Activated naive CD4-positive, alpha-beta T cell treated with anti-CD3 and anti-CD28 coated beads for 36 hours (primary cell): ENCODE measurements at regions of chr14 and their contacts with region 1.

Region 1: DNA sequence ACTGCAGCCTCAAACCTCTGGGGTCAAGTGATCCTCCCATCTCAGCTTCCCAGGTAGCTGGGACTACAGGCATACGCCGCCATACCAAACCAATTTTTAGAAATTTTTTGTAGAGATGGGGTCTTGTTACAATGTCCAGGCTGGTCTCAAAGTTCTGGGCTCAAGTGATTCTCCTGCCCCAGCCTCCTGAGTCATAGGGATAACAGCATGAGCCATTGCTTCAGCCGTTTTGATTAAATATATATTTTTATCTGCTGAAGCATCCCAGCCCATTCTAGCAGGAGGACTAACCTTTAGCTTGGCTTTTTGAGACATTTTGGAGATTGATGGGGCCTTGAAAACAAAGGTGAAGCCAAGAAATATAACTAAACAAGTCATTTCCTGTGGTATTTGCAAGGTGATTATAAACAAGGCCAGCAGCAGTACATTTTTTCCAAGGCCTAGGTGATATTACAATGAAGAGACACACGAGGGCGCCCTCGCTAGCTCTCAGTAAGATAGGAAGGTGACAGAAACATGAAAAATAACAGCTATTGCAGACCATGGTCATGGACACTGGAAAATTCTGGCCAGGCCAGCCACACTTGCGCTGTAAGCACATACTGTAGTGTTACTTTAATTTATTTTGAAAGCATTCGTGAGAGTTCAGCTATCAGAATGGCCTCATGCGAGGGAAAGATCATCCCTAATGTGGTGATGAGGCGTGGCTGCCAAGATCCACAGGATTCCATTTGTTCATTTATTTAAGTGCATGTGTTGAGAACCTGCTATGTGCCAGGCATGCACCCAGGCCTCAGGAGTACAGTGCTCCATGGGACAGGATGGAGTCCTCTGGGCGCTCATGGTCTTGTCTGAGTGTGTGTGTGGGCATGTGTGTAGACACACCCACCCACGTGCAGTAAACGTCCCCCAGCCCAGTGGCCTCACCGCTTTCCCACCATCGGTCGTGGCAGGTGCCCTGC is 63.5 kb downstream of the DGLUCY start:
- DNase-seq: peak; percentile 84
- H3K4me3 Mint-ChIP-seq: no peak overlapping the region
- H3K27ac Mint-ChIP-seq: peak overlapping the region; percentile 58
- H3K4me1 Mint-ChIP-seq: peaks cover 9% of the 10 kb centered on the region
- H3K27me3 Mint-ChIP-seq: no peaks in the 10 kb centered on the region

Region 2: GRCh38 chr14:90726656-90727055 is 450.7 kb before region 1 on chr14:
- CTCF ChIA-PET with region 1: no interaction called
- intact Hi-C with region 1: no loop called
- DNase-seq: no peak
- H3K4me3 Mint-ChIP-seq: no peak overlapping the region
- H3K27ac Mint-ChIP-seq: no peak overlapping the region
- H3K4me1 Mint-ChIP-seq: no peaks in the 10 kb centered on the region
- H3K27me3 Mint-ChIP-seq: no peaks in the 10 kb centered on the region

Region 3: GRCh38 chr14:90903101-90903500 is 274.3 kb before region 1 on chr14:
- CTCF ChIA-PET with region 1: interaction called, 215 read pairs
- intact Hi-C with region 1: loop called (anchors 1 kb)
- DNase-seq: peak; percentile 81
- H3K4me3 Mint-ChIP-seq: no peak overlapping the region
- H3K27ac Mint-ChIP-seq: no peak overlapping the region
- H3K4me1 Mint-ChIP-seq: peaks cover 25% of the 10 kb centered on the region
- H3K27me3 Mint-ChIP-seq: no peaks in the 10 kb centered on the region

Region 4: DNA sequence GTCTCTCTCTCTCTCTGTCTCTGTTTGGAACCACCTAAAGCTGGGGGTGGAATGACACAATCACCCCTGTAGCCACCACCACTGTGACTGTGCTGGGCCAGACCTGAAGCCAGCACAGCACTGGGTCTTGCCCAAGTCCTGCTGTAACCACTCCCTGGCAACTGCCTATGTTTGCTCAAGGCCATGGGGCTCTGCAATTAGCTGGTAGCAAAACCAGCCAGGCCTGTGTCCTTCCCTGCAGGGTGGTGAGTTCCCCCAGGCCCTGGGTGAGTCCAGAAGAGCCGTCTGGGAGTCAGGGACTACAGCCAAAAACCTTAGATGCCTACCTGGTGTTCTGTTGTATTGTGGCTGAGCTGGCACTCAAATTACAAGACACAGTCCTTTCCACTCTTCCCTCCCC is 12.7 kb before region 1 on chr14:
- CTCF ChIA-PET with region 1: interaction called, 12 read pairs
- intact Hi-C with region 1: no loop called
- DNase-seq: no peak
- H3K4me3 Mint-ChIP-seq: no peak overlapping the region
- H3K27ac Mint-ChIP-seq: no peak overlapping the region
- H3K4me1 Mint-ChIP-seq: no peaks in the 10 kb centered on the region
- H3K27me3 Mint-ChIP-seq: no peaks in the 10 kb centered on the region

Region 5: DNA sequence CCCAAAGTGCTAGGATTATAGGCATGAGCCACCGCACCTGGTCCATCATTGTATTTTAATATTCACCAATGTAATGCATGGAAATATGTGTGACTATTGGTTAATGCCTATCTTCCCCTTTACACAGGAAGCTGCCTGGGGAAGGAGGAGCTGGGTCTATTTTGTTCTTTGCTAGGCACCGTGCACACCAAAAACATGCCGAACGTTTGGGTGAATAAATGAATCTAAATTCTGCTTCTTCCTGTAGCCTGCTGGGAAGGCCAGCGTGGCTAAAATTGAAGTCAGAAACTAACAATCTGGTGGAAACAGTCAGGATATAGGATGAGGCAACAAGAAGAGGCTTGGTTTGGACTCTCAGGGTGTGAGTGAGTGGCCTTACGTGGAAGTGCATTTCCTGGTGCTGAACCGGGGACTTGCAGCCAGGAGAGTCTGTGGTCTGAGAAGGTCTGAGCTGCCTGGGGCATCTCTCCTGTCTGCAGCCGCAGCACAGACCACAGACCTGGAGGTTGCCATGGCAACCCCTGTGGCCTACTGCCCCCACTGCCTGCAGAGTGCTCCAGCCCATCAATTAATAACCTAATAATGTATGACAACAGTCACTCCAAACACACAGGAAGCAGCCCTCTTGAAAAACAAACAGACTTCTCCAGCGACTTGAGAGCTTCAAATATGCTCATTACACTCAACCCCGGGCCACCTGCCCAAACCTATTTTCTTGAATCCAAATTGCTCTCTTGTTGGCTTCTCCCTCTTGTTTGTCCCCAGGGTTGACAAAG is 72.7 kb after region 1 on chr14:
- CTCF ChIA-PET with region 1: interaction called, 14 read pairs
- intact Hi-C with region 1: no loop called
- DNase-seq: peak; percentile 42
- H3K4me3 Mint-ChIP-seq: no peak overlapping the region
- H3K27ac Mint-ChIP-seq: peak overlapping the region; percentile 70
- H3K4me1 Mint-ChIP-seq: peaks cover 81% of the 10 kb centered on the region
- H3K27me3 Mint-ChIP-seq: no peaks in the 10 kb centered on the region

Region 6: DNA sequence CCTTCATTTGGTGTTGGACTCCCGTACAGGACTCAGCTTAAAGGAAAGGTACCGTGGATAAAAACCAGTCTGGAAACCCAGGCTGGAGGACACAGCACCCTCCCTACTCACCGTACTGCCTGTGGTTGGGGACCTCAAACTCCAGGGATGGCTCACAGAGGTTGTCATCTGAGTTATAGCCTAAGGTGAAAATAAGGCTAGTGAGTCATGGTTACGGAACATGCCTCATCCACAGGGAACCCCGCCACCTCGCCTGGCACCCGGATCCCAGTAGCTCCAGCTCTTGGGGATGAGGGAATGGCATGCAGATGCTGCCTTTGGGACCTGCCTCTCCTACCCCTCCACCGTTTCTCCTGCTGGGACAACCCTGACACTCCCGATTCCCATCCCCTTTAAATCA is 104.0 kb after region 1 on chr14:
- CTCF ChIA-PET with region 1: interaction called, 203 read pairs
- intact Hi-C with region 1: loop called (anchors 1 kb)
- DNase-seq: no peak
- H3K4me3 Mint-ChIP-seq: no peak overlapping the region
- H3K27ac Mint-ChIP-seq: no peak overlapping the region
- H3K4me1 Mint-ChIP-seq: peaks cover 3% of the 10 kb centered on the region
- H3K27me3 Mint-ChIP-seq: no peaks in the 10 kb centered on the region

Region 7: GRCh38 chr14:91418387-91419043 is 241.2 kb after region 1 on chr14:
- CTCF ChIA-PET with region 1: no interaction called
- intact Hi-C with region 1: loop called (anchors 1 kb)
- DNase-seq: peak; percentile 84
- H3K4me3 Mint-ChIP-seq: peak overlapping the region; percentile 64
- H3K27ac Mint-ChIP-seq: peak overlapping the region; percentile 74
- H3K4me1 Mint-ChIP-seq: peaks cover 32% of the 10 kb centered on the region
- H3K27me3 Mint-ChIP-seq: no peaks in the 10 kb centered on the region